Tibial artery (tissue), 4 donors: ENCODE measurements at regions of chr4 and their contacts with region 1.

Region 1: GRCh38 chr4:36891971-36892370 is 352.6 kb upstream of the NWD2 start:
- DNase-seq: no peak
- H3K4me3 ChIP-seq: no peak overlapping the region
- H3K27ac ChIP-seq: no peak overlapping the region
- H3K4me1 ChIP-seq: no peaks in the 10 kb centered on the region
- H3K27me3 ChIP-seq: no peaks in the 10 kb centered on the region
- CTCF ChIP-seq: no peak

Region 2: DNA sequence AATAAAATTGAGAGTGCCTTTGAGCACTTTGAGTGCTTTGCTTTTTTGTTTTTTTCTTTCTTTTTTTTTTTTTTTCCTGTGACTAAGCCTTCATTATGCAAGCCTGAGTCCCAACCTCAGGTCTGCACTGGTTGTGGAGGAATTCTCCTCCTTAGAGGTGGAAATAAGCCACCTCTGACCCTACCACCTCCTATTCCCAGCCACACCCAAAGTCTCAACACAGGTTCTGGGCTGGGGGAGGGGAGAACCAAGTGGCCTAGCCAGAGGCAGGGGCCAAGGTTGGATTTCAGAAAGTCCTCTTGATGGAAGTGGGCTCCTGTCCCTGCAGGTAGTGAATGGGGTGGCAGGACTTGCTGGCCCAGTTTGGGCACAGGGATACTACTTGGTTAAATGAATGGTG is 827.8 kb before region 1 on chr4:
- intact Hi-C with region 1: no loop called
- DNase-seq: no peak
- H3K4me3 ChIP-seq: no peak overlapping the region
- H3K27ac ChIP-seq: no peak overlapping the region
- H3K4me1 ChIP-seq: no peaks in the 10 kb centered on the region
- H3K27me3 ChIP-seq: no peaks in the 10 kb centered on the region
- CTCF ChIP-seq: no peak

Region 3: GRCh38 chr4:37324546-37324945 is 432.6 kb after region 1 on chr4:
- intact Hi-C with region 1: loop called (anchors 10 kb)
- DNase-seq: no peak
- H3K4me3 ChIP-seq: no peak overlapping the region
- H3K27ac ChIP-seq: no peak overlapping the region
- H3K4me1 ChIP-seq: no peaks in the 10 kb centered on the region
- H3K27me3 ChIP-seq: no peaks in the 10 kb centered on the region
- CTCF ChIP-seq: no peak